Right lobe of liver (tissue), 6 donors: ENCODE measurements at regions of chr17 and their contacts with region 1.

Region 1: DNA sequence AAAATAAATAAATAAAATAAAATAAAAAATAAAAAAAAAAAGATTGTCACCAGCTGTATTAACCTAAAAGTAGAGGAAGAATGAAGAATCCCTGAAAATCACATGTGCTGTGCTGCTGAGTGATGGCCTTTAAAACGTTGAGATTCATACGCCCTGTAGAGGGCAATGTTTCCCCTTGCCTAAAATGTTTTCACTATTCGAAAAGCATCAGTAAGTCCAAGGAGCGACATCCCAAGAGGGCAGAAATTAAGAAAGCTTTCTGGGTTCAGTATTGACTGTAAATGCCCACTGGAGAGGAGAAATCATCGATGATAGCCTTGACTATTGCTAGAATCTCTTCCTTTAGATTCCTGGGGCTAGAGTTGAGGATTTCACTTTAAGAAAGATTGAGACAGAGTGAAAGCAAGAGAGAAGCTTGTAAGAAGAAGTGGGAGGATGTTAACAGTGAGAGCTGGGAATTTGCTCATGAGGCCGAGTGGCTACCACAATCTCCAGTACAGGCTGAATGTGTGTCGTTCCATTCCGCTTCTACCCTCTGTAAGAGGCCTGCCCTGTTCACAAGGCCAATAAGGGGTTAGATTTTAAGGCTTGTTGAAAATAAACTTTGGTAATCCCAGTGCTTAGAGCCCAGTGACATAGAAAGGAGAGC is 170.8 kb upstream of the FAM20A start:
- DNase-seq: no peak
- ATAC-seq: peak; percentile 90 to 94 (median 90)
- H3K4me3 ChIP-seq: no peak overlapping the region
- H3K27ac ChIP-seq: peak overlapping the region in 1 of 3 donors; percentile 1
- H3K4me1 ChIP-seq: peaks cover 0 to 10% (median 0%) of the 10 kb centered on the region in 4 donors
- H3K27me3 ChIP-seq: no peaks in the 10 kb centered on the region
- CTCF ChIP-seq: peak; percentile 69 to 75 (median 70)
- POLR2A ChIP-seq: no peak

Region 2: DNA sequence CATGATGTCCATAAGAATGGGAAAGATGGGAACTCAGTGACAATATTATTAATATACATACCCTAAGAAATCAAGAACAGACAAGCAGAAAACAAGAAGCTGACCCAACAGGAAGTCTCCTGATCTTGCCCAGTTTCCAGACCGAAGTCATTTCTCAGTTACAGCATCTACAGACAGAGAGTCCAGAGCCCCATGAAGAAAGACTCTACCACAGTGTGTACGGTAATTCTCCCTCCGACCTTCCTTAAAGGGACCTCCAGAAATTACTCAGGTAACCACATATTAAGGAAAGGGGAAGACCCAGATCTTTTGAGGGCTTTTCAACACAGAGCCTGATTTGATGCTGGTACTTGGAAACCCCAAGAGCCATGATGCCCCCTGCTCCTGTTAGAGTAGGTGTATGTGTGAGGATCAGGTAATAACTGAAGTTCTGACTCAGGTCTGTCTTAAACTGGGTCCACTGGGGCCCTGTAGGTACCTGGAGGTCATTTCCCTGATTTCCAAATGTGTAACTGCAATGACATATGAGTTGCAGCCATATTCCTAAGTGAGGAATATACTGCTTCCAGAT is 50.8 kb after region 1 on chr17:
- intact Hi-C with region 1: no loop called
- DNase-seq: no peak
- ATAC-seq: no peak
- H3K4me3 ChIP-seq: no peak overlapping the region
- H3K27ac ChIP-seq: peak overlapping the region; percentile 55 to 82 (median 67)
- H3K4me1 ChIP-seq: peaks cover 0 to 55% (median 22%) of the 10 kb centered on the region in 4 donors
- H3K27me3 ChIP-seq: no peaks in the 10 kb centered on the region
- CTCF ChIP-seq: no peak
- POLR2A ChIP-seq: no peak

Region 3: GRCh38 chr17:69235338-69235930 is 463.4 kb after region 1 on chr17:
- intact Hi-C with region 1: loop called in 1 of 2 experiments (anchors 5 kb)
- DNase-seq: peak; percentile 62 to 78 (median 65)
- ATAC-seq: peak; percentile 82 to 92 (median 91)
- H3K4me3 ChIP-seq: no peak overlapping the region
- H3K27ac ChIP-seq: no peak overlapping the region
- H3K4me1 ChIP-seq: no peaks in the 10 kb centered on the region
- H3K27me3 ChIP-seq: no peaks in the 10 kb centered on the region
- CTCF ChIP-seq: peak; percentile 75 to 80 (median 77)
- POLR2A ChIP-seq: no peak